Activated CD4-positive, alpha-beta memory T cell treated with anti-CD3 and anti-CD28 coated beads for 36 hours (primary cell): ENCODE measurements at regions of chr3 and their contacts with region 1.

Region 1: DNA sequence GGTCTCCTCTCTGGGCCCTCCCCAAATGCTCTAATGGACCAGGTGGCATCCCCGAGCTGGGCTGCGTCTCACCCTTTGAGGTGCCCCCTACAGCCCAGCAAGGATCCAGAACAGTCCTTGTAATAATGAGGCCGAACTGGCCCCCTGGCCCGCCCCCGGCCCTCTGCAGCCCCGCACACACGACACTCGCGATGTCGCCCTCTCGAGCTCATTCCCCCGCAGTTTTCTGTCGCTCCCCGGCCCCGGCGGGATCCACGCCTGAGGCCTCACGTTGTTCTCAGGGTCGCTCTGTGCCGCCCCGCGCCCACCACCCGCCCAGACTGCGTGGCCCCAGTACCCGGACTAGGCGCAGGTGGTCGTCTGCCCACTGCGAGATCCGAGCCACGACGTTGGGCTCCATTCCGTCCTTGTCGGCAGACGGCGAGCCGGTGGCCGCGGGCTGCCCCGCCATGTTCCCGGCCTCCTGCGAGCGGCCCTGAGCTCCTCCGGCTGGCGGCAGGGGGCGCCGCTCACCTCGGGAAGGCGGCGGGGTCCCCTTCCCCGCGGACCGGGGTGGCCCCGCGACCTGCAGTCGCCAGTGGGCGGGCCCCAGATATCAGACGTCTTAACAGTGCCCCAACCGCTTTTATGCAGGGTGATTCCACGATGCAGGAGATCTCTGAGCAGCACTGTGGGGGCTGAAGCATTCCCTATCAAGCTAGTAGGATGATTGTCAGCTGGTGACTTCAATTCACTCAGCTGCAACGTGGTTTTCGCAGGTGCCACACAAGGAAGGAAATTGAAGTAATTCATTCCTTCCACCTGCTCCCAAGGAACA is at the start of gene C3orf33:
- DNase-seq: peak; percentile 83
- H3K4me3 Mint-ChIP-seq: peak within 1 kb of the TSS; percentile 84
- H3K27ac Mint-ChIP-seq: peak within 1 kb of the TSS; percentile 53
- H3K4me1 Mint-ChIP-seq: peaks cover 9% of the 10 kb centered on the region
- H3K27me3 Mint-ChIP-seq: peaks cover 7% of the 10 kb centered on the region
- total RNA-seq, gene C3orf33: 1.6 to 2.5 TPM

Region 2: DNA sequence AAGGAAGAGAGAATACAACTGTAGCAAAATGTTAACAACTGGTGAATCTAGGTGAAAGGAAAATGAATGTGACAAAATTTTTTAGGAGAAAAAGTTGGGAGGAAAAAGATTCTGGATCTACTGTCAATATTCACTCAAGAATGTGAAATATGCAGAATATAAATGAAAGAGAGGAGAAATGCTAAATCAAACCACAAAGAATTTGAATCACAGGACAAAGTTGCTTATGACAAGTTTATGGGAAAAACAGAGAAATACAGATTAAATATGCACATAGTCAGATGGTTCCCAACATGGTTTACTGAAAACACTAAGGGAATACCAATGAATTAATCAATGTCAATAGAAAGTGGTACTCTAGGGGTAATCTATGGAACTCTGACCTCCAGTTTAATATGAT is 27.5 kb before region 1 on chr3:
- CTCF ChIA-PET with region 1: interaction called, 13 read pairs
- POLR2A ChIA-PET with region 1: no interaction called
- intact Hi-C with region 1: no loop called
- DNase-seq: no peak
- H3K4me3 Mint-ChIP-seq: no peak overlapping the region
- H3K27ac Mint-ChIP-seq: no peak overlapping the region
- H3K4me1 Mint-ChIP-seq: no peaks in the 10 kb centered on the region
- H3K27me3 Mint-ChIP-seq: no peaks in the 10 kb centered on the region

Region 3: GRCh38 chr3:155847993-155848392 is 42.0 kb after region 1 on chr3:
- CTCF ChIA-PET with region 1: interaction called, 35 read pairs
- POLR2A ChIA-PET with region 1: interaction called, 13 read pairs
- intact Hi-C with region 1: no loop called
- DNase-seq: no peak
- H3K4me3 Mint-ChIP-seq: no peak overlapping the region
- H3K27ac Mint-ChIP-seq: no peak overlapping the region
- H3K4me1 Mint-ChIP-seq: peaks cover 61% of the 10 kb centered on the region
- H3K27me3 Mint-ChIP-seq: no peaks in the 10 kb centered on the region

Region 4: DNA sequence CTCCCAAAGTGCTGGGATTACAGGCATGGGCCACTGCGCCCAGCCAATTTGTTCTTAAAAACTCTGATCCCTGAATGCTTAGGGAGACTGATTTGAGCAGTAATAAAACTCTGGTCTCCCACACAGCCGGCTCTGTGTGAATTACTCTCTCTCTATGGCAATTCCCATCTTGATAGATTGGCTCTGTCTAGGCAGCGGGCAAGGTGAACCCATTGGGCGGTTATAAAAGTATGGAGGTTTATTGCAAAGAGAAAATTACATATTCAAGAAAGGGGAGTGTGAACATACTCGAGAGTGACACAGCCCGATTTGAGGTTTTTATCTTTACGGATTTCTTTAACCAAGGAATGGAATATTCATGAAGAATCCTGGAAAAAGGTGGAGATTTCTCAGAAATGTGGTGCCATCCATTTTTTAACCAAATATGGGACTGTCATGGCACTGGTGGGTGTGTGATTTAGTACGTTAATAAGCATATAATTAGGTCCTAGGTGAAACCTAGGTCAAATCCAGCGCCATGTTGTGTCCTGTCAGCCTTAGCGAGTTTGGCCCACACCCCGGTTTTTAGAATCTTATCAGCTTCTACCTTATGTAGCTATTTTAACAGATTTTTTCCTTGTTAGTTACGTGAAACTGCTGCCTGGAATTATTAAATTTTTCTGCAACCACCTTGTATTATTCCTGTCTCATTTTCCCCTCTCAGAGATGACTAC is 57.2 kb after region 1 on chr3:
- CTCF ChIA-PET with region 1: interaction called, 17 read pairs
- POLR2A ChIA-PET with region 1: interaction called, 3 read pairs
- intact Hi-C with region 1: no loop called
- DNase-seq: no peak
- H3K4me3 Mint-ChIP-seq: no peak overlapping the region
- H3K27ac Mint-ChIP-seq: peak overlapping the region; percentile 79
- H3K4me1 Mint-ChIP-seq: peaks cover 24% of the 10 kb centered on the region
- H3K27me3 Mint-ChIP-seq: no peaks in the 10 kb centered on the region